ENCODE measurements at regions of chr7 and their contacts with region 1.

Region 1: GRCh38 chr7:75889826-75890225 is 11.0 kb downstream of the RHBDD2 start:
- DNase-seq: no peak
- ATAC-seq: no peak
- H3K4me3 ChIP-seq: no peak overlapping the region
- H3K27ac ChIP-seq: no peak overlapping the region
- H3K4me1 ChIP-seq: peaks cover 0 to 10% (median 0%) of the 10 kb centered on the region in 9 donors
- H3K27me3 ChIP-seq: no peaks in the 10 kb centered on the region
- CTCF ChIP-seq: no peak

Region 2: GRCh38 chr7:76000367-76000965 is 110.6 kb after region 1 on chr7:
- intact Hi-C with region 1: loop called in 1 of 10 experiments (anchors 5 kb)
- DNase-seq: no peak
- ATAC-seq: no peak
- H3K4me3 ChIP-seq: no peak overlapping the region
- H3K27ac ChIP-seq: no peak overlapping the region
- H3K4me1 ChIP-seq: peaks cover 0 to 20% (median under 1%) of the 10 kb centered on the region in 9 donors
- H3K27me3 ChIP-seq: no peaks in the 10 kb centered on the region
- CTCF ChIP-seq: no peak